Activated CD4-positive, alpha-beta T cell treated with anti-CD3 and anti-CD28 coated beads, Interleukin-2, amount 10 ng/mL, durations not matched to agents 24 days and 14 days (primary cell): ENCODE measurements at regions of chr17 and their contacts with region 1.

Region 1: DNA sequence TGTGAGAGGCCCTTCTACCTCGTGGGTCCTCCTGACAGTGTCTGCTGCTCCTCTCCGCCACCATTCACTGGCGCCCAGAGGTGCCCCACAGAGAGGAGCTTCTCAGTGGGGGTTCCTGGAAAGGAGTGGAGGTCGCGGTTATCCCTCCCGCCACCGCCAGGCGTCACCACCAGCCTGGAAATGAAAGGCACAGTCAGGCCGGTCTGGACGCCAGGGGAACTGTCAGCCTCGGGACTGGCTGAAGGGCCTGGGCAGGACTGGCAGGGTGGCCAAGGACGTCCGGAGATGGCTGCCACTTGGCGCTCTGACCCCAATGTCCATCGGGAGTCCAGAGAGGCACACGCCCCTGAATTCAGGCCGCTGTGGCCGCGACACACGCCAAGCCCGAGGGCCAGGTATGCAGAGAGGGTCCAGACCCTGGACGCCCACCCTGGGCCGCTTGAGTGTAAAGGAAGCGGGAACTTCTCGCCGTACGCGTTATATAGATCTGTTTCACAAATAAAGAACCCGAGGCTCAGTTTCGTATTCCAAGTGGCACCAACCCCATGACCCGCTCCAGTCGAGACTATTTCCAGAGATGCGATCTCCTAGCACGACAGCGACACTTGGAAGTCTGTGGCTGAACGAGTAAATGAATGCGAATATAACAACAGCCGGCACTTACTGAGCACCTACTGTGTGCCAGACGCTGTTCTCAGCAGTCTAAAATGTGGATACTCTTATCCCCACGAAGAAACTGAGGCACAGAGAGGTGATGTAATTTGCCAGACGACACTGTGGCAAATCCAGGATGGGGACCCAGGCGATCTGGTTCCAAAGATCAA is 7.6 kb upstream of the NXPH3 start:
- DNase-seq: peak; percentile 95
- H3K4me3 Mint-ChIP-seq: peak overlapping the region; percentile 70
- H3K27ac Mint-ChIP-seq: no peak overlapping the region
- H3K4me1 Mint-ChIP-seq: peaks cover 32% of the 10 kb centered on the region
- H3K27me3 Mint-ChIP-seq: peaks cover 35% of the 10 kb centered on the region

Region 2: GRCh38 chr17:49508061-49508865 is 59.8 kb before region 1 on chr17:
- intact Hi-C with region 1: no loop called
- DNase-seq: no peak
- H3K4me3 Mint-ChIP-seq: no peak overlapping the region
- H3K27ac Mint-ChIP-seq: no peak overlapping the region
- H3K4me1 Mint-ChIP-seq: no peaks in the 10 kb centered on the region
- H3K27me3 Mint-ChIP-seq: peaks cover 17% of the 10 kb centered on the region

Region 3: GRCh38 chr17:49603720-49604119 is 35.6 kb after region 1 on chr17:
- intact Hi-C with region 1: no loop called
- DNase-seq: no peak
- H3K4me3 Mint-ChIP-seq: no peak overlapping the region
- H3K27ac Mint-ChIP-seq: no peak overlapping the region
- H3K4me1 Mint-ChIP-seq: peaks cover 2% of the 10 kb centered on the region
- H3K27me3 Mint-ChIP-seq: no peaks in the 10 kb centered on the region

Region 4: GRCh38 chr17:49779739-49780231 is 211.7 kb after region 1 on chr17:
- intact Hi-C with region 1: loop called (anchors 2 kb)
- DNase-seq: peak; percentile 74
- H3K4me3 Mint-ChIP-seq: no peak overlapping the region
- H3K27ac Mint-ChIP-seq: peak overlapping the region; percentile 47
- H3K4me1 Mint-ChIP-seq: peaks cover 5% of the 10 kb centered on the region
- H3K27me3 Mint-ChIP-seq: peaks cover 4% of the 10 kb centered on the region

Region 5: GRCh38 chr17:49851387-49852291 is 283.6 kb after region 1 on chr17:
- intact Hi-C with region 1: loop called (anchors 2 kb)
- DNase-seq: peak; percentile 88
- H3K4me3 Mint-ChIP-seq: peak overlapping the region; percentile 87
- H3K27ac Mint-ChIP-seq: peak overlapping the region; percentile 81
- H3K4me1 Mint-ChIP-seq: peaks cover 15% of the 10 kb centered on the region
- H3K27me3 Mint-ChIP-seq: peaks cover 17% of the 10 kb centered on the region